Heart left ventricle (tissue), 16 donors: ENCODE measurements at regions of chr4 and their contacts with region 1.

Region 1: DNA sequence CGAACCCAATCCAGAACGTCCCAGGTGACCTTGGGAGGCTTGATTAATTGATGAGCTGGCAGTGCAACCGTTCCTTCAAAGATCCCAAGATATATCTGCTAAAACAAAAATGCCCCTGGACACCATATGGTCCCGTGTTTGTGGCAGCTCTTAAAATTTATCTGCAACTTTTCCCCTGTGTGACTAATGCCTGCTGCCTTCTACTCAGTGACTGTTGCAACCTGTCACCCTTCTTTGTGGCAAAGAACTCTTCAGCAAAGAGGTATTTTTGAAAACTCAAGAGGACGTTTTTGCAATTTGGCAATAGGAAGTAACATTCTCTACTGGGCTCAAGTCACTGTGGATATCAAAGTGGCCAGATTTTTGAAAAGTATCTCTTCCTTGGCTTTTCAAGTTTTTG is 75.8 kb upstream of the SOD3 start:
- DNase-seq: no peak
- ATAC-seq: no peak
- H3K4me3 ChIP-seq: no peak overlapping the region
- H3K27ac ChIP-seq: no peak overlapping the region
- H3K4me1 ChIP-seq: no peaks in the 10 kb centered on the region
- H3K27me3 ChIP-seq: no peaks in the 10 kb centered on the region
- CTCF ChIP-seq: no peak
- POLR2A ChIP-seq: no peak

Region 2: DNA sequence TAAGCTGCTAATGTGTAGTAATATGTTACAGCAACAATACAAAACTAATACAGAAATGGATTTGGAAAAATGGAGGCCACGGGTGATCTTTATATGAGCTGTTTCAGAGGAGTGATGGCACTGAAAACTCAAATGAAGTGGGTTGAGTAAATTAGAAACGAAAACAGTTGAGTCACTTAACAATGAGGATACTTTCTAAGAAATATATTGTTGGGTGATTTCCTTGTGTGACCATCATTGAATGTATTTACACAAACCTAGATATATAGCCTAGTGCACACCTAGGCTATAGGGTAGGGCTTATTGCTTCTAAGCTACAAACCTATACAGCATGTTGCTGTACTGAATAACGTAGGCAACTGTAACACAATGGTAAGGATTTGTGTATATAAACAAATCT is 104.7 kb before region 1 on chr4:
- intact Hi-C with region 1: loop called in 1 of 10 experiments (anchors 5 kb)
- DNase-seq: no peak
- ATAC-seq: no peak
- H3K4me3 ChIP-seq: no peak overlapping the region
- H3K27ac ChIP-seq: no peak overlapping the region
- H3K4me1 ChIP-seq: no peaks in the 10 kb centered on the region
- H3K27me3 ChIP-seq: no peaks in the 10 kb centered on the region
- CTCF ChIP-seq: no peak
- POLR2A ChIP-seq: no peak

Region 3: DNA sequence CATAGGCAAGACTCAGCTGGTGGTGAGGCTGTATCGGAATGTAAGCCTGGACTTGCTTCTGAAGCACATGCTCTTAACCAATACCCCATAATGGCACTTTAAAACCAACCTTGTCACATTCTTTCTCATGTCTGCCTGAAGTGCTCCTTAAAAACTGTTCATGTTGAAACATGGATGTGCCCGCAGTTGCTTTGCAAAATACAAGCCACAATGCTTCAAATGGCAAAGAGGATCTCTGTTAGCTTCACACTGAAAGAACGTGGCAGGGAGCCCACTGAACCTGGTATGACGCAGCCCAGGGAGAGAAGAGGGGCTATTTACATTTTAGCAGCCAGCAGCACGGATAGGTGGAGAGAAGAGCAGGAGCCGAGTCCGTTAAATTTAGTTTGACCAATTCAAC is 105.1 kb after region 1 on chr4:
- intact Hi-C with region 1: no loop called
- DNase-seq: no peak
- ATAC-seq: no peak
- H3K4me3 ChIP-seq: no peak overlapping the region
- H3K27ac ChIP-seq: no peak overlapping the region
- H3K4me1 ChIP-seq: no peaks in the 10 kb centered on the region
- H3K27me3 ChIP-seq: no peaks in the 10 kb centered on the region
- CTCF ChIP-seq: no peak
- POLR2A ChIP-seq: no peak

Region 4: DNA sequence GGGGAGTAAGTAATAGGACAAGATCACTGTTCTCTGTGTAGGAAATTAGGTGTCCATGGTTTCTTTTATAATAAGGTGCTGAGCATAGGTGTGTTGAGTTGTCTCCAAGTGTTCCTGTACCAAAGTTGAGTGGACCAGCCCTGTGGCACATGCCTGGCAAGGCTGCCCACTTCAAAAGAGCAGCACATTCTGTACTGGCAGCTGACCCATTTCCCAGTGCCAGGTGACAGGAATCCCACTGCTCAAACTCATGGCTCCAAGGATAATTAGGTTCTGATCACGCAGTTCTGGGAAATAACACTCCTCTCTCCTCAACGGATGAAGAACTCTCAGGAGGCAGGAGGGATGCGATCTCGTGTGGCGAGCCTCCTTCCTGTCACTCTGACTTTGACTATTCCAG is 323.9 kb after region 1 on chr4:
- intact Hi-C with region 1: no loop called
- DNase-seq: no peak
- ATAC-seq: peak in 1 of 4 donors; percentile 58
- H3K4me3 ChIP-seq: no peak overlapping the region
- H3K27ac ChIP-seq: no peak overlapping the region
- H3K4me1 ChIP-seq: no peaks in the 10 kb centered on the region
- H3K27me3 ChIP-seq: no peaks in the 10 kb centered on the region
- CTCF ChIP-seq: no peak
- POLR2A ChIP-seq: no peak